ENCODE measurements at regions of chr1 and their contacts with region 1.

Region 1: DNA sequence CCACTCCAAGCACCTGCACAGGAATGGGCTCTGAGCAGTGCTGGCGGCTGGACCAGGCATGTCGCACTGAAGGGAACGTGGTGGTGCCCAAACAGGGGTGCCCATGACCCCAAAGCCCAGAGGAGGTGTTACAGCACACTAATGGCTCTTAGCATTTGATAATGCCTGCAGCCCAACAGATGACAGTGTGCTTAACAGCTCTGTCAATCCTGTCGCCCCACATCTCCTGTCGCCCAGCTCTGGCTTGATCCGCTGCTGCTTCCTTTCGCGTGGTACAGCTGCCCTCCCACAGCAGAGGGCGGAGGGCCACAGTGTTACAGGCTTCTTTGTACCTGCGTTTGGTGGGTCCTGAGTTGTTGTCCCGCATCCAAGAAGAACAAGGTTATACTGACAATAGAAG is 32.2 kb upstream of the CR1L start:
- DNase-seq: no peak
- H3K4me3 ChIP-seq: no peak overlapping the region
- H3K27ac ChIP-seq: no peak overlapping the region
- H3K4me1 ChIP-seq: no peaks in the 10 kb centered on the region
- H3K27me3 ChIP-seq: no peaks in the 10 kb centered on the region
- CTCF ChIP-seq: no peak
- POLR2A ChIP-seq: no peak

Region 2: DNA sequence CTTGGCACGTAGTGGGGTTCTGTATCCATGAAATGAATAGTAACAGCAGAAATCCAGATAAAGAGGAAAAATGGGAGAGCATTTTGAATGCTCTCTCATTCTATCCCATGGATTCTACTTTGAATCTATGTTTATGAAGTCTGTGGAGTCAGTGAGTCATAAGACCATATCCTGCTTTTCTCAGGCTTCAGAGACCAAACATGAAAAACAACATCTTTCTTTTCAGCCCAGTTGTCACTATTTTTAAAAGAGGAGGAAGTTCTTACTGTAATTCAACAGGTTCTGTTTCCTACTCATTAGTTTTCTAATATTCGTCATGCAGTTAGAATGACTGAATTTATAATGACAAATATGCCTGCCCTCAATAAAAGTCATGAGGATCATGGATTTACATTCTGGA is 330.7 kb before region 1 on chr1:
- intact Hi-C with region 1: no loop called
- DNase-seq: no peak
- H3K4me3 ChIP-seq: no peak overlapping the region
- H3K27ac ChIP-seq: peak overlapping the region in 1 of 2 donors; percentile 55
- H3K4me1 ChIP-seq: no peaks in the 10 kb centered on the region
- H3K27me3 ChIP-seq: no peaks in the 10 kb centered on the region
- CTCF ChIP-seq: no peak
- POLR2A ChIP-seq: no peak

Region 3: GRCh38 chr1:207579436-207579799 is 33.3 kb before region 1 on chr1:
- intact Hi-C with region 1: loop called (anchors 2 kb)
- DNase-seq: no peak
- H3K4me3 ChIP-seq: no peak overlapping the region
- H3K27ac ChIP-seq: no peak overlapping the region
- H3K4me1 ChIP-seq: no peaks in the 10 kb centered on the region
- H3K27me3 ChIP-seq: no peaks in the 10 kb centered on the region
- CTCF ChIP-seq: peak in 1 of 3 donors; percentile 8
- POLR2A ChIP-seq: no peak

Measured in breast epithelium (tissue), 4 donors.